ENCODE measurements at regions of chr1 and their contacts with region 1.

Region 1: GRCh38 chr1:31182352-31182751 is 57.3 kb downstream of the NKAIN1 start:
- H3K4me3 ChIP-seq: no peak overlapping the region; the same call in 1 of the 2 replicates
- H3K27ac ChIP-seq: no peak overlapping the region
- H3K4me1 ChIP-seq: no peaks in the 10 kb centered on the region
- CTCF ChIP-seq: peak; percentile 69

Region 2: DNA sequence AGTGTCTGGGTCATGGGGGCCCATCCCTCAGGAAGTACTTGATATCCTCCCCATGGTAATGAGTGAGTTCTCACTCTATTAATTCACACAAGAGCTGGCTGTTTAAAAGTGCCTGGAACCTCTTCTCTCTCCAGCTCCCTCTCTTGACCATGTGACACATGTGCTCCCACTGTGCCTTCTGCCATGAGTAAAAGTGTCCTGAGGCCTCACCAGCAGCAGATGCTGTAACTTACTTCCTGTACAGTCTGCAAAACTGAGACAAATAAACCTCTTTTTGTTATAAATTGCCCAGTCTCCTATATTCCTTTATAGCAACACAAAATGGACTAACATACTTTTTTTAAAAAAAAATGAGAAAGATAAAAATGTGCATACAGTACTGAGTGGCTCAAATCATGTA is 140.8 kb before region 1 on chr1:
- CTCF ChIA-PET with region 1: no interaction called
- POLR2A ChIA-PET with region 1: no interaction called
- H3K4me3 ChIP-seq: no peak overlapping the region
- H3K27ac ChIP-seq: no peak overlapping the region
- H3K4me1 ChIP-seq: peaks cover 8% of the 10 kb centered on the region
- CTCF ChIP-seq: no peak

Region 3: DNA sequence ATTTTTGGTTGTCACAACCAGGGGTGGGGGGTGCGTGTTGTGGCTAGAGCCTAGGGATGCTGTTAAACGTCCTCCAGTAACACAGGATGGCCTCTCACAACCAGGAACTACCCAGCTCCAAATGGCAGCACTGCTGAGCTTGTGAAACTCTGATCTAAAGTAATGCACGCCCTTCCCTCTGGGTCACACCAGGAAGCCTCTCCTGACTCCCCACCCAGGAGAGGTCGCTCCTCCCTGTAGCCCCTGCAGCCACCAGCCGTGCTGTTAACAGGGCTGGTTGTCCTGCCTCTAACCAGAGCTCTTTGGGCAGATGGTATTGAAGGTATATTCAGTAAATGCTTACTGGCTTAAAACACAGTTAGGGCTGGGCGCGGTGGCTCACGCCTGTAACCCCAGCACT is 15.9 kb before region 1 on chr1:
- CTCF ChIA-PET with region 1: interaction called, 41 read pairs
- POLR2A ChIA-PET with region 1: interaction called, 8 read pairs
- H3K4me3 ChIP-seq: no peak overlapping the region
- H3K27ac ChIP-seq: no peak overlapping the region
- H3K4me1 ChIP-seq: no peaks in the 10 kb centered on the region
- CTCF ChIP-seq: no peak

Region 4: GRCh38 chr1:31227891-31228568 is 45.7 kb after region 1 on chr1:
- CTCF ChIA-PET with region 1: interaction called, 10 read pairs
- POLR2A ChIA-PET with region 1: no interaction called
- H3K4me3 ChIP-seq: no peak overlapping the region
- H3K27ac ChIP-seq: no peak overlapping the region
- H3K4me1 ChIP-seq: no peaks in the 10 kb centered on the region
- CTCF ChIP-seq: no peak

Region 5: GRCh38 chr1:31335007-31335406 is 152.7 kb after region 1 on chr1:
- CTCF ChIA-PET with region 1: interaction called, 11 read pairs
- POLR2A ChIA-PET with region 1: no interaction called
- H3K4me3 ChIP-seq: no peak overlapping the region
- H3K27ac ChIP-seq: no peak overlapping the region
- H3K4me1 ChIP-seq: no peaks in the 10 kb centered on the region
- CTCF ChIP-seq: peak; percentile 49; the same call in 1 of the 2 replicates

Region 6: GRCh38 chr1:31422505-31423319 is 240.4 kb after region 1 on chr1:
- CTCF ChIA-PET with region 1: interaction called, 119 read pairs
- POLR2A ChIA-PET with region 1: no interaction called
- H3K4me3 ChIP-seq: no peak overlapping the region
- H3K27ac ChIP-seq: no peak overlapping the region
- H3K4me1 ChIP-seq: no peaks in the 10 kb centered on the region
- CTCF ChIP-seq: peak; percentile 84

Measured in HEK293 (cell line).